GM10248 (cell line): ENCODE measurements at regions of chr7 and their contacts with region 1.

Region 1: GRCh38 chr7:108146070-108146837 is 16.1 kb upstream of the LAMB4 start:
- DNase-seq: peak; percentile 25
- CTCF ChIP-seq: peak; percentile 80

Region 2: GRCh38 chr7:108114117-108114841 is 32.0 kb before region 1 on chr7:
- CTCF ChIA-PET with region 1: interaction called, 110 read pairs
- POLR2A ChIA-PET with region 1: no interaction called
- DNase-seq: no peak
- CTCF ChIP-seq: peak; percentile 82

Region 3: GRCh38 chr7:108124820-108125219 is 21.4 kb before region 1 on chr7:
- CTCF ChIA-PET with region 1: interaction called, 107 read pairs
- POLR2A ChIA-PET with region 1: no interaction called
- DNase-seq: no peak
- CTCF ChIP-seq: no peak

Region 4: GRCh38 chr7:108135446-108136190 is 10.6 kb before region 1 on chr7:
- CTCF ChIA-PET with region 1: interaction called, 107 read pairs
- POLR2A ChIA-PET with region 1: no interaction called
- DNase-seq: peak; percentile 45
- CTCF ChIP-seq: no peak

Region 5: DNA sequence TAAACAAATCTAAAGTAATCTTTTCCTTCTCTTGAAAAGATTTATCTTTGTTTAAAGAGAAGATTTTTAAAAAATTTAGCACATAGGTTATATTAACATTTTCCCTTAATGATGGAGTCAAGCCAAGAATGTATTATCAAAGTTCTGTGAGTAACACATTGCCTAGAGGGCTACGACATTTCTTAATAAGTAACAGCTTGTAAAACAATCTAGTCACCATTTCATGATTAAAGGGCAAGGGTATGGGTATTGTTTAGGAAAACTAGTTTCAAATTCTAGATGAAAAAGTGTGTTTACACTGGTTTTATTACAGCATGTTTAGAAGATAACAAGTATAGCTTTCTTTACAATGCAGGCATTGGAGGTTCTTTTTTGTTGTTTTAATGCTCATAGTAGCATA is 12.5 kb after region 1 on chr7:
- CTCF ChIA-PET with region 1: interaction called, 15 read pairs
- POLR2A ChIA-PET with region 1: no interaction called
- DNase-seq: no peak
- CTCF ChIP-seq: no peak